ENCODE measurements at regions of chr5 and their contacts with region 1.

Region 1: DNA sequence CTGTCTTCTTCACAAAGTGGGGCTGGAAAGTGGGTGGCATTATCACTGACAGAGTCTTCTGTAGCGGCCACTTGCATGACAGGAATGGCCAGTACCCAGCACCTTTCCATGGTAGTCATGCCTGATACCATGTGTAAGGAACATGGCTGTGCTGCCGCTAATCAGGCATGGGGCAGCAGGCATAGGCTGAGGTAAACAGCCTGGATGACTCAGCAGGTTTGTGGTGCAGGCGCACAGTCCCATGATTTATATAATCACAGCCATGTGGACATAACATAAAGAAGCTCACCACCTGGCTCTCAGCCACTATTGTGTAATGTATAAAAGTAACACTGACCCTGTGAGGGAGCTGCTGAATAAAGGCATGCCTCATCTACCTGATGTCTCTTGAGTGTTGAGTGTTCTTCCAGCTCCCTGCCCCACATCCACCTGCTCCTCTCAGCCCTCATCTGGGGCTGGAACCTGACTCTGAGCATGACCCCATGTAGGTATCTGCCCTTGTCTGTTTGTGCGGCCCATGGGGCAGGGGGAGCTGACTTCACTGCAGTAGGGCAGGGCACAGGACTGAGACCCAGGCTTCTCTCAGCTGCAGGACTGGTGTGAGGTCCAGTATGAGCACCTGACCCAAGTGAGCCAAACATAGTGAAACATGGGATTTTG is 13.2 kb upstream of the ICE1 start:
- DNase-seq: no peak
- H3K4me3 ChIP-seq: no peak overlapping the region
- H3K27ac ChIP-seq: no peak overlapping the region
- H3K4me1 ChIP-seq: no peaks in the 10 kb centered on the region
- H3K27me3 ChIP-seq: no peaks in the 10 kb centered on the region
- CTCF ChIP-seq: no peak
- EP300 ChIP-seq: no peak
- POLR2A ChIP-seq: no peak

Region 2: DNA sequence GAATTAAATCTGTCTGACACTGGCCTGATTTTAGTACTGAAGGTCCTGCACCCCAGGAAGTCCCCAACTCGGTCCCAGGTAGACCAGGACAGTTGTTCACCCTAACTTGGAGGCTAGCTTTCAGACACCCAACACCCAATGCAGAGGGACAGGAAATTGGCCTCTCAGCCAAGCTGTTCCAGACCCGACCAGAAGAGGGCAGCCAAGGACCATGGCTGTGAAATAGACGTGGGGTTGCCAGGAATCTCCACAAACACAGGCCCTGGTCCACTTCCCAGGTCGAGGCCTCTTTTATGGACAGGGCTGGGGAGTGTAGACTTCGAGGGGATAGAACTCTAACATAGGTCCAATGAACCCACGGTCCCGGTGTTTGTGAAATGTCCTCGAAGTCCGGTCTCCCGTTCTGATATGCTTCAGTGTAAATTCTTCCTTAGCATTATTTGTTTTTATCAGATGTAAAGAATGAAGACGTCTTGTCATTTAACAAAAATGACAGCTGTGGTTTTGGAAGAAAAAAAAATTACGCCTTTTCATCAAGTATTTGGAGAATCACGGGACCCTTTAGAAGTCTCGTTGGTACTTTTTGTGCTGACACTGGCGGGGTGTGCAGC is 529.5 kb before region 1 on chr5:
- intact Hi-C with region 1: loop called (anchors 10 kb)
- DNase-seq: peak; percentile 81 to 92
- H3K4me3 ChIP-seq: no peak overlapping the region
- H3K27ac ChIP-seq: no peak overlapping the region
- H3K4me1 ChIP-seq: no peaks in the 10 kb centered on the region
- H3K27me3 ChIP-seq: peaks cover 0 to 3% (median under 1%) of the 10 kb centered on the region in 3 donors
- CTCF ChIP-seq: peak in 5 of 7 experiments; percentile 76 to 91 (median 87)
- EP300 ChIP-seq: no peak
- POLR2A ChIP-seq: no peak